ENCODE measurements at regions of chr14 and their contacts with region 1.

Region 1: GRCh38 chr14:103346286-103346685 is 12.2 kb downstream of the EIF5 start:
- H3K4me3 ChIP-seq: no peak overlapping the region
- H3K27ac ChIP-seq: no peak overlapping the region
- H3K4me1 ChIP-seq: no peaks in the 10 kb centered on the region
- CTCF ChIP-seq: no peak

Region 2: GRCh38 chr14:103333754-103334643 is 12.3 kb before region 1 on chr14 and contains the start of gene EIF5:
- CTCF ChIA-PET with region 1: interaction called, 5 read pairs
- POLR2A ChIA-PET with region 1: interaction called, 46 read pairs
- H3K4me3 ChIP-seq: peak within 1 kb of the TSS; percentile 99
- H3K27ac ChIP-seq: peak within 1 kb of the TSS; percentile 94
- H3K4me1 ChIP-seq: peaks cover 6% of the 10 kb centered on the region; the same call in 1 of the 2 replicates
- CTCF ChIP-seq: peak; percentile 76

Measured in HEK293 (cell line).